ENCODE measurements at regions of chr10 and their contacts with region 1.

Region 1: GRCh38 chr10:14653271-14654228 is 121.1 kb downstream of the FAM107B start:
- DNase-seq: peak; percentile 84
- H3K4me3 Mint-ChIP-seq: peak overlapping the region; percentile 59
- H3K27ac Mint-ChIP-seq: peak overlapping the region; percentile 96
- H3K4me1 Mint-ChIP-seq: peaks cover 22% of the 10 kb centered on the region
- H3K27me3 Mint-ChIP-seq: no peaks in the 10 kb centered on the region
- CTCF ChIP-seq: no peak

Region 2: DNA sequence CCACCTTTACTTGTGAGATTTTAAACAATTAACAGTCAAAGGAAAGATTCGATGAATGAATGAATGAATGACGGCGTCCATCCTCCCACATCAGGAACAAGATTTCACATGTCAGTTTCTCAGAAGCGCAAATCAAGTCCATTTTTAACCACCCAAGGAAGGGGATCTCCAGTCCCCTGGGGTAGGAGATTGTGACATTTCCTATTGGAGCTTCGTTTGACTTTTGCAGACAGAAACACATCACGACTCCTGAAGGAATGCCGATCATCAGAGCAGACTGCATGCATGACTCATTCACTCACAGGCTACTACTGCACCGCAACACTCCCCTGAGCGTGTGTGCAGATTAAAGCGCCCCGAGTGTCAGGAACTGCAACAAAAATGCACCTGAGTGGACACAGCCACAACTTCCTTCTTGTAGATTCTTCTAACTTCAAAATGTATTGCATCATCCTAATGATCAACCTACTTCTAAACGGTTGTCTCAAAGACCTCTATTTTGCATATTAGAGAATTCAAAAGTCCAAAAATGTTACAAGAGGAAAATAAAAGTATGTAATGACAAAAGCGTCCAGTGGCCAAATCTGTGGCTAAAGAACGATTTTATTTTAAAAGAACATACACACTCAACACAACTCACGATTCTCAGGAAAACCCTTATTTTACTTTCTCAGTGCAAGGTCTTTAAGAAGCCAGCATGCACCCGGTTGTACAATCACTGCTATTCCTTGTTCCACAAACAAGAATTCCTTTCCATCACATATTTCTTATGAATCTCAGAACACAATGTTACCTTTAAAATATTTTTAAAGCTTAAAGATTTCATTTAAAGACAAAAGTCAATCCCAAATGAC is 51.5 kb before region 1 on chr10:
- CTCF ChIA-PET with region 1: no interaction called
- POLR2A ChIA-PET with region 1: interaction called, 5 read pairs
- intact Hi-C with region 1: loop called (anchors 2 kb)
- DNase-seq: peak; percentile 84
- H3K4me3 Mint-ChIP-seq: peak overlapping the region; percentile 85
- H3K27ac Mint-ChIP-seq: no peak overlapping the region
- H3K4me1 Mint-ChIP-seq: peaks cover 36% of the 10 kb centered on the region
- H3K27me3 Mint-ChIP-seq: no peaks in the 10 kb centered on the region
- CTCF ChIP-seq: no peak

Measured in MCF 10A (cell line).